ENCODE measurements at regions of chr1 and their contacts with region 1.

Region 1: GRCh38 chr1:57655161-57655560 is 231.3 kb upstream of the DAB1 start:
- DNase-seq: no peak

Region 2: GRCh38 chr1:57494530-57495079 is 160.6 kb before region 1 on chr1:
- intact Hi-C with region 1: no loop called
- DNase-seq: no peak

Region 3: DNA sequence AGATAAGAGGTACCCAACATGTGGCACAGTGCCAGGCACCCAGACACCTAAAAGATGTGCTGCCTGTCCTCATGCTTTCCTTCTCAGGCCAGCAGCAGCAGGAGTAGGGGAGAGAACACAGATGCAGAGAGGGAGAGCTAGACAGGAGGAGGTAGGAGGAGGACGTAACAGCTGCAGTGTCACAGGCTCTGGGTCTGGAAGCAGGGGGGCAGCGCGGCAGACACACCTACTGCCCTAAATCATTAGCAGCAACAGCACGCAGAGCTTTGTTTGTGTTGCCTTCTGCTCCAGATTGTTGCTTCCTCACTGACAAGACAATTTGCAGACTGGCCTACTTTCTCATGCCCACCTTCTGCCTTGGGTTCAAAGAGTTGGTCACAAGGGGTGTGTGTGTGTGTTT is 34.6 kb before region 1 on chr1:
- intact Hi-C with region 1: loop called in 1 of 2 experiments (anchors 1 kb)
- DNase-seq: no peak

Region 4: DNA sequence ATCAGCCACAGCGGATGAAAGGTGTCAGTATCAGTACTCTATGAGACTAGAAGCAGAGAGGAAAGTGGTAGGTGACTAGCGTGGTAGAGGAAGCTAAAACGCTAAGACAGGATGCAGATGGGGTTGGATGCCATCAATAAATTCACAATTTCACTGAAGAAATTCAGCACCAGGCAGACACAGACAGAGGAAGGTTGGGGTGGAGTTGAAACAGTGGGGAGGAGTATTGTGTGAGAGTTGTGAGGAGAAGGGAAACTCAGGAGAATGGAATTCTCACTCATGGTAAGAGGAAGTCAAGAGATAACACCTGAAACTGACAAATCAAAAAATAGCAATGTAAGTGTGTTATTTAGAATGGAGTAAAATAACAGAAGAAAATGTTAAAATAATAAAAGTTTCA is 22.8 kb before region 1 on chr1:
- intact Hi-C with region 1: no loop called
- DNase-seq: no peak

Region 5: GRCh38 chr1:57719274-57719673 is 64.1 kb after region 1 on chr1:
- intact Hi-C with region 1: no loop called
- DNase-seq: no peak

Region 6: GRCh38 chr1:57799490-57800115 is 144.4 kb after region 1 on chr1:
- intact Hi-C with region 1: no loop called
- DNase-seq: no peak

Measured in posterior vena cava (tissue), 2 donors.